CD4-positive, alpha-beta memory T cell (primary cell): ENCODE measurements at regions of chr19 and their contacts with region 1.

Region 1: DNA sequence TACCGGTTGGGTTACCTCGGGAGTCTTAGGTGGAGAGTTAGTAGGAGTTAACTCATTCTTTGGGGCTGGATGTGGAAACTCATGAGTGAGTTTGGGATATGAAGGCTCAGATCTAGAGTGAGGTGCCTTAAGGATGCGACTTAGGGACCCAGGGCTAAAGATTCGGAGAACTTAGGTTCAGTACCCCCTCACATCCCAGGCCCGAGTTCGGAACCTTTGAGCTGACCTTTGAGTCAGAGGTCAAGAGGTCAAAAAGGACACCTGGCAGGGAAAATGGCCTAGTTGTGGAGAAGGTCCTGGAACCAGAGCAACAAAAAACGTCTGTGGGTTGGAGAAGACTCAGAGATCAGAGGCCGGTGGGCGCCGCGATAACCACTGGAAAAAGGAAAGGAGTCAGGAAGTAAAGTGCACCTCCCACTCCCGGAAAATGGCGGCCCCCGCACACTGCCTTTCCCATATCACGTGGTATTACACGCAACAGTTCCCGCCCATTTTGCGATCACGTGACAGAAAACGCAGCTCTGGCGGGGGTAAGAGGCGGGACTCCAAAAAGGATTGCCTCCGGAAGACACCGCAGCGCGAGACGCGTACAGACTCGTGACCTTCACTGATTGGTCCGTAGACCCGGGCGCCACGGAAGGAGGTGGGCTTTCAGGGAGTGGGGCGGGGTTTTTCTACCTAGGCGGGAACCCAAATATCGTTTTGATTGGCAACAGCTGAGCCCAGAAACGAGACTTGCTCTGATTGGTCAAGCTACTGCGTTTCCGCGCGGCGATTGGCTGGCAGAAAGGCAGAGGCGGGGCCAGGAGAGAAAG is at the start of gene ACTMAP:
- DNase-seq: peak; percentile 100
- H3K4me3 ChIP-seq: peak within 1 kb of the TSS; percentile 81 to 98
- H3K4me3 Mint-ChIP-seq: peak within 1 kb of the TSS; percentile 95 to 100 (median 98)
- H3K27ac ChIP-seq: peak within 1 kb of the TSS; percentile 86
- H3K27ac Mint-ChIP-seq: peak within 1 kb of the TSS; percentile 89 to 99 (median 99)
- H3K4me1 ChIP-seq: peaks cover 42% of the 10 kb centered on the region
- H3K4me1 Mint-ChIP-seq: peaks cover 22 to 50% (median 31%) of the 10 kb centered on the region in 4 donors
- H3K27me3 ChIP-seq: no peaks in the 10 kb centered on the region
- H3K27me3 Mint-ChIP-seq: no peaks in the 10 kb centered on the region
- total RNA-seq, gene ACTMAP: 5.2 to 5.5 TPM

Region 2: DNA sequence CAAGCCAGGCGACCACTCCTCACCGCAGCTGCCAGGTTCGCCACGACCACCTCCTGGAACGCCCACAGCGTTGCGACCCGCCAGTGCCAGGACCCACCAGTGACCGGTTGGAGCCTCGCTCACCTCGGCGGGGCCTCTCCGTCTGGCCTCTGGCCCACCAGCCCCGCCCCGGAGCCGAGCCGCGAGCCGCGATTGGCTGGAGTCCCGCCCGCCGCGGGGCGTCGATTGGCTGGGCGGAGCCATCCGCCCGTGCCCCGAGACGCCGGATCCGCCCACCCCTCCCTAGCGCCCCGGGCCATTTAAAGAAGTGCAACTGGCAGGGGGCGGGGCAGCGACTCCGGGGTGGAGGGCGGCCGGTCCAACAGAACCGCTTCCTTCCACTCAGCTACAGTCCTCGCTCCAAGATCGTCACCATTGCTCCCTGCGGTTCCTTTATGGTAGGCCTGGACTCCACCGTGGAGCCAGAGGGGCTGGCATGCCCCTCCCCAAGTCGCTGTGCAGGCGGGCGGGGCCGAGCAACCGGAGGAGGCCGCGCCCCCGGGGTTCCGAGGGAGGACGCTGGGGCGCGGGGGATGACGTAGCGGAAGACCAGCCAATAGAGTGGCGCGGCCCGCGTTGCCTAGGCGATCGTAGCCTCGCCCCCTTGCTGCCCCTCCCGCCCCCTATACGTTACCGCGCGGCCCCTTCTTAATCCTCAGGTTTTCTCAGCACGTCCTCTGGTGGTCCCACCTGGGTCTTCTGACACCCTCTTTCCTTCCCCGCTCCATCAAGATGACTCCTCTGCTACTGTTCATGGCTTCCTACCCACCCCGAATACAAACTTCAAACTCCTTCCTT is 305.9 kb before region 1 on chr19 and contains the start of gene SERTAD3:
- CTCF ChIA-PET with region 1: no interaction called
- POLR2A ChIA-PET with region 1: no interaction called
- intact Hi-C with region 1: loop called (anchors 5 kb)
- DNase-seq: peak; percentile 96 to 99 (median 97)
- H3K4me3 ChIP-seq: peak within 1 kb of the TSS; percentile 96 to 100
- H3K4me3 Mint-ChIP-seq: peak within 1 kb of the TSS; percentile 96 to 100 (median 100)
- H3K27ac ChIP-seq: peak within 1 kb of the TSS; percentile 75
- H3K27ac Mint-ChIP-seq: peak within 1 kb of the TSS; percentile 85 to 100 (median 99)
- H3K4me1 ChIP-seq: peaks cover 11% of the 10 kb centered on the region
- H3K4me1 Mint-ChIP-seq: peaks cover 11 to 22% (median 18%) of the 10 kb centered on the region in 4 donors
- H3K27me3 ChIP-seq: no peaks in the 10 kb centered on the region
- H3K27me3 Mint-ChIP-seq: no peaks in the 10 kb centered on the region
- total RNA-seq, gene SERTAD3: 17.8 to 19.4 TPM

Region 3: DNA sequence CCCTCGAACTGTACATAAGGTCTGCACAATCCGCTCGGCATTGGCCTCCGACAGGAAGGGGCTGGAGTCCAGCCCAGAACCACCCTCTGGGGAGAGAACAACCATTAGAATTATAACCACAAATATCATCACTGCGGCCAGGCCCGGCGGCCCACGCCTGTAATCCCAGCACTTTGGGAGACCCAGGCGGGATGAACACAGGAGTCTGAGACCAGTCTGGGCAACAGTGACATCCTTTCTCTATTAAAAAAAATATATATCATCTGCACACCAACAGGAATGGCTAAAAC is 45.0 kb before region 1 on chr19:
- CTCF ChIA-PET with region 1: no interaction called
- POLR2A ChIA-PET with region 1: no interaction called
- intact Hi-C with region 1: no loop called
- DNase-seq: no peak
- H3K4me3 ChIP-seq: no peak overlapping the region
- H3K4me3 Mint-ChIP-seq: no peak overlapping the region
- H3K27ac ChIP-seq: no peak overlapping the region
- H3K27ac Mint-ChIP-seq: peak overlapping the region in 1 of 7 donors; percentile 8
- H3K4me1 ChIP-seq: no peaks in the 10 kb centered on the region
- H3K4me1 Mint-ChIP-seq: peaks cover under 1 to 7% (median 4%) of the 10 kb centered on the region in 4 donors
- H3K27me3 ChIP-seq: no peaks in the 10 kb centered on the region
- H3K27me3 Mint-ChIP-seq: no peaks in the 10 kb centered on the region

Region 4: GRCh38 chr19:40716655-40717324 is 33.5 kb before region 1 on chr19 and contains the starts of genes COQ8B and ITPKC:
- CTCF ChIA-PET with region 1: no interaction called
- POLR2A ChIA-PET with region 1: interaction called, 32 read pairs
- intact Hi-C with region 1: loop called (anchors 1 kb)
- DNase-seq: peak; percentile 98 to 100 (median 99)
- H3K4me3 ChIP-seq: peak within 1 kb of the TSS; percentile 78 to 83
- H3K4me3 Mint-ChIP-seq: peak within 1 kb of the TSS; percentile 87 to 97 (median 92)
- H3K27ac ChIP-seq: peak within 1 kb of the TSS; percentile 98
- H3K27ac Mint-ChIP-seq: peak within 1 kb of the TSS; percentile 96 to 99 (median 98)
- H3K4me1 ChIP-seq: peaks cover 70% of the 10 kb centered on the region
- H3K4me1 Mint-ChIP-seq: peaks cover 40 to 83% (median 58%) of the 10 kb centered on the region in 4 donors
- H3K27me3 ChIP-seq: no peaks in the 10 kb centered on the region
- H3K27me3 Mint-ChIP-seq: no peaks in the 10 kb centered on the region
- total RNA-seq, gene COQ8B: 48.0 to 54.7 TPM
- total RNA-seq, gene ITPKC: 8.1 to 10.2 TPM

Region 5: GRCh38 chr19:40777937-40778705 is 27.9 kb after region 1 on chr19 and contains the start of gene RAB4B:
- CTCF ChIA-PET with region 1: interaction called, 11 read pairs
- POLR2A ChIA-PET with region 1: interaction called, 142 read pairs
- intact Hi-C with region 1: loop called (anchors 1 kb)
- DNase-seq: peak; percentile 100
- H3K4me3 ChIP-seq: peak within 1 kb of the TSS; percentile 67 to 98
- H3K4me3 Mint-ChIP-seq: peak within 1 kb of the TSS; percentile 92 to 98 (median 95)
- H3K27ac ChIP-seq: peak within 1 kb of the TSS; percentile 89
- H3K27ac Mint-ChIP-seq: peak within 1 kb of the TSS; percentile 95 to 99 (median 99)
- H3K4me1 ChIP-seq: peaks cover 29% of the 10 kb centered on the region
- H3K4me1 Mint-ChIP-seq: peaks cover 24 to 45% (median 31%) of the 10 kb centered on the region in 4 donors
- H3K27me3 ChIP-seq: no peaks in the 10 kb centered on the region
- H3K27me3 Mint-ChIP-seq: no peaks in the 10 kb centered on the region
- total RNA-seq, gene RAB4B: 53.5 to 55.0 TPM

Region 6: DNA sequence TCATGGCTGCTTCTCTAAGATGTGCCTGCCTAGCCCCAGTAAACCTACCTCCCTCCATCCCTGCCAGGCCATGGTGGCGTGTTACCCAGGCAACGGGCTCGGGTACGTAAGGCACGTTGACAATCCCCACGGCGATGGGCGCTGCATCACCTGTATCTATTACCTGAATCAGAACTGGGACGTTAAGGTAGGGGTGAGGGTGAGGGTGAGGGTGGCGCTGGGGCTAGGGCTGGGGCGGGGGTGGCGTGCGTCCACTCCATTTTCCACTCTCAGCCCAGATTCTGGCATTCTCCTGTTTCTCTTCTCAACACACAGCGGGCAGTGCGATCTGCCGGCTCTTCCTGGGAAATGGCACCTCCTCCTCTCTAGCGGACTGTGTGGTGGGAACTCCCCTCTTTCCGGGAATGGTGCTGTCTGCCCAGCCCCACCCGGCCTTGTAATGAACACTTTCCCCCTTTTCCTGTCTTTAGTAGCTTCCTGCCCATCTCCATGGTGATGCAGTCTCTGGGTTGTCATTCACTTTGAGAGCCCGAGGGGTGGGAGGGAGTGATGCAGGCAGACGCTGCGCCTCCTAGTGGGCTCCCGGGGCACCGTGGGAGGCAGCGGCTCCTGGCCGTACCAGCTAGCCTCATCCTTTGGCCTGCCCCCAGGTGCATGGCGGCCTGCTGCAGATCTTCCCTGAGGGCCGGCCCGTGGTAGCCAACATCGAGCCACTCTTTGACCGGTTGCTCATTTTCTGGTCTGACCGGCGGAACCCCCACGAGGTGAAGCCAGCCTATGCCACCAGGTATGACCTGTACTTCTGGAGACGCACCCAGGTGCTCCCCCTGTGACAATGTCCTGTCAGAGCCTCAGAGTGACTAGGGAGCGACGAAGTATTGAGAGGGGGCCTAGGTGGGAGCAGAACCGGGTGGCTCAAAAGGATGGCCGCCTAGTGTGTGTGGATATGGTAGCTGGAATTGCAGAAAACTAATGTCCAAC is 56.5 kb after region 1 on chr19:
- CTCF ChIA-PET with region 1: interaction called, 14 read pairs
- POLR2A ChIA-PET with region 1: interaction called, 133 read pairs
- intact Hi-C with region 1: loop called (anchors 1 kb)
- DNase-seq: peak; percentile 82 to 92 (median 83)
- H3K4me3 ChIP-seq: peak overlapping the region in 1 of 2 donors; percentile 23
- H3K4me3 Mint-ChIP-seq: peak overlapping the region; percentile 80 to 90 (median 88)
- H3K27ac ChIP-seq: peak overlapping the region; percentile 84
- H3K27ac Mint-ChIP-seq: peak overlapping the region; percentile 91 to 100 (median 99)
- H3K4me1 ChIP-seq: peaks cover 97% of the 10 kb centered on the region
- H3K4me1 Mint-ChIP-seq: peaks cover 63 to 96% (median 78%) of the 10 kb centered on the region in 4 donors
- H3K27me3 ChIP-seq: no peaks in the 10 kb centered on the region
- H3K27me3 Mint-ChIP-seq: no peaks in the 10 kb centered on the region

Region 7: GRCh38 chr19:40822161-40822560 is 71.9 kb after region 1 on chr19:
- CTCF ChIA-PET with region 1: interaction called, 10 read pairs
- POLR2A ChIA-PET with region 1: interaction called, 3 read pairs
- intact Hi-C with region 1: loop called (anchors 1 kb)
- DNase-seq: no peak
- H3K4me3 ChIP-seq: no peak overlapping the region
- H3K4me3 Mint-ChIP-seq: peak overlapping the region in 1 of 8 donors; percentile 6
- H3K27ac ChIP-seq: no peak overlapping the region
- H3K27ac Mint-ChIP-seq: peak overlapping the region in 1 of 7 donors; percentile 57
- H3K4me1 ChIP-seq: peaks cover 40% of the 10 kb centered on the region
- H3K4me1 Mint-ChIP-seq: peaks cover 24 to 63% (median 39%) of the 10 kb centered on the region in 4 donors
- H3K27me3 ChIP-seq: no peaks in the 10 kb centered on the region
- H3K27me3 Mint-ChIP-seq: no peaks in the 10 kb centered on the region